ENCODE measurements at regions of chr2 and their contacts with region 1.

Region 1: GRCh38 chr2:189798312-189799029 is 14.2 kb downstream of the PMS1 start:
- DNase-seq: peak in 1 of 2 experiments; percentile 47
- ATAC-seq: peak; percentile 66 to 88; a peak in 4 of 6 replicates
- H3K4me3 ChIP-seq: no peak overlapping the region
- H3K27ac ChIP-seq: peak overlapping the region in 1 of 2 experiments; percentile 32; a peak in 1 of 6 replicates
- H3K4me1 ChIP-seq: peaks cover 33% of the 10 kb centered on the region
- CTCF ChIP-seq: peak; percentile 74
- EP300 ChIP-seq: no peak
- POLR2A ChIP-seq: no peak
- RAD21 ChIP-seq: peak; percentile 76 to 82

Region 2: DNA sequence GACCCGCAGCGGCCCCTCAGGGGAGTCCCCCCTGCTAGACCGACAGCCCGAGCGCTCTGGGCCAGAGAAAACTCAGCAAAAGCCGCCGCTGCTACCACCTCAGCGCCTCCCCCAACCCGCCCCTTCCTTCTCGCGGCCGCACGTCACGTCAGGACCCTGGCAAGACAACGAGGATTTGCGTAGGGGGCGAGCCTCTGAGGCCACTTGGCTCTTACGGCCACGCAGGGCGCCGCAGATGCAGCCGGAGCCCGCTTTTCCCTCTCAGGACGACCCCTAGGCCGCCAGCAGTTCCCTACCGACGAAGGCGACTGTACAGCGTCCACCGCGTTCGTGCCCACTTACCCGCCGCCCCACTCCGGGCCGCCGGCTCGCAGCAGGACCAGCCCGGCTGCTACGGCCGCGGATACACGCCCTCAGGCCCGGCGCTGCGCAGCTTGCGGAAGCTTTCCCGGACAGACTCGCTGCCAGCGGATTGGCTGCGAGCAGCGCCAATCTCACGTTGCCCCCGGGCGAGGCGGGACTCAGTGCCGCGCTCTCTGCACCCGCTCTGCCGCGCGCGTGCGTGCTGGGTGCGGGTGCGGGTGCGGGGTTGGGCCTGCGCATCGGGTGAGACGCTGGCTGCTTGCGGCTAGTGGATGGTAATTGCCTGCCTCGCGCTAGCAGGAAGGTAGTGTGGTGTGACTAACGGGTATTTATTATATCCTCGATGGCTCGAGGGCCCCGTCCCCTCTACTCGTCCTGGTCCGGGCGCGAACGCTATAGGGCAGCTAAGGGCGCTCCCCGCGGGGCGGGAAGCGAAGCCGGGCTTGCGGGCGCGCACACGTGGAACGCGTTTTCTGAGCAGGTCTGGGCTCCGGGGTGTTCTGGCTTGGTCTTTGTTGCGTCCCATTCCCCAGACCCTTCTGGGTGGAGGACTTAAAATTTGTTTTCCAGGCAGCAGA is 14.3 kb before region 1 on chr2 and contains the starts of genes ORMDL1 and PMS1:
- CTCF ChIA-PET with region 1: interaction called, 11 read pairs
- POLR2A ChIA-PET with region 1: interaction called, 4 read pairs
- DNase-seq: peak; percentile 82 to 97
- ATAC-seq: peak; percentile 97 to 98
- H3K4me3 ChIP-seq: peak within 1 kb of the TSS; percentile 88
- H3K27ac ChIP-seq: peak within 1 kb of the TSS; percentile 89 to 96
- H3K4me1 ChIP-seq: peaks cover 13% of the 10 kb centered on the region; the same call in 2 of the 3 replicates
- CTCF ChIP-seq: no peak
- EP300 ChIP-seq: no peak
- POLR2A ChIP-seq: peak; percentile 78
- RAD21 ChIP-seq: no peak
- polyA plus RNA-seq, gene ORMDL1: 100 and 106 TPM in 2 replicates
- polyA plus RNA-seq, gene PMS1: 21.2 and 28.9 TPM in 2 replicates

Region 3: DNA sequence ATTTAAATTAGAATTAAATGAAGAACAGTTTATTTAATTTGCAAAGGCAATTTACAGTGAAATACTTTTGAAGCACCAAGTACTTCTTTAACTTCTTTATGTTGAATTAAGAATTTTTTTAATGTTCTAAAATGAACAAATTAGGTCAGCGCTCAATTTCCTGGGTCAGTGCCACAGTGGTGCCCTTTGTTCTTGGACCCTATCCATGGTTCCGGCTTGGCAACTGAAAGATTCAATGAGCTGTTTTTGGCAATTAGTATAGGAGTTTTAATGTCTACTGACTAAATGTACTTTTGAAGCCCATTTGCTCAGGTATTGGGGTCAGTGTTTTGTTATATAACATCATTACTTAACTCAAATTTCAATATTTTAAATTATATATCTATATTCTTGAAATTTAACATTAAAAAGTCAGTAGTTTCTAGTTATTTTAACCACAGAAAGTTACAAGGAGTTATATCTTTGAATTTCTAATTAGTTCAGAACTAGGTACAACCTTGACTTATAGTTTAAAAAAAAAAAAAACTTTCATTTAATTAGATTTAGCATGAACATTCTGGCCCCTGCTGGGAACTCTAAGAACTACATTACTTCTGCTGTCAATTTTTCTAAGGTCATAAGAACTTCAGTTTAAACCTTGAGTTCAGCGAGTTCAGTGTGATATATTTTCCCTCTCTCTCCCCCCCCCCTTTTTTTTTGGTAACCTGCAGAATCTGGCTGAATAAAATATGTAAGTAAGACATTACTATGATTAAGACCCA is 271.6 kb after region 1 on chr2:
- CTCF ChIA-PET with region 1: interaction called, 15 read pairs
- POLR2A ChIA-PET with region 1: no interaction called
- DNase-seq: peak; percentile 7 to 74
- ATAC-seq: peak in 1 of 2 experiments; percentile 43; a peak in 2 of 6 replicates
- H3K4me3 ChIP-seq: no peak overlapping the region
- H3K27ac ChIP-seq: no peak overlapping the region
- H3K4me1 ChIP-seq: no peaks in the 10 kb centered on the region
- CTCF ChIP-seq: peak; percentile 82
- EP300 ChIP-seq: no peak
- POLR2A ChIP-seq: no peak
- RAD21 ChIP-seq: peak; percentile 87 to 94

Measured in A549 (cell line).